GM18951 (cell line): ENCODE measurements at regions of chr14 and their contacts with region 1.

Region 1: GRCh38 chr14:20855652-20856291 is 35.4 kb upstream of the RNASE3 start:
- POLR2A ChIP-seq: no peak

Region 2: DNA sequence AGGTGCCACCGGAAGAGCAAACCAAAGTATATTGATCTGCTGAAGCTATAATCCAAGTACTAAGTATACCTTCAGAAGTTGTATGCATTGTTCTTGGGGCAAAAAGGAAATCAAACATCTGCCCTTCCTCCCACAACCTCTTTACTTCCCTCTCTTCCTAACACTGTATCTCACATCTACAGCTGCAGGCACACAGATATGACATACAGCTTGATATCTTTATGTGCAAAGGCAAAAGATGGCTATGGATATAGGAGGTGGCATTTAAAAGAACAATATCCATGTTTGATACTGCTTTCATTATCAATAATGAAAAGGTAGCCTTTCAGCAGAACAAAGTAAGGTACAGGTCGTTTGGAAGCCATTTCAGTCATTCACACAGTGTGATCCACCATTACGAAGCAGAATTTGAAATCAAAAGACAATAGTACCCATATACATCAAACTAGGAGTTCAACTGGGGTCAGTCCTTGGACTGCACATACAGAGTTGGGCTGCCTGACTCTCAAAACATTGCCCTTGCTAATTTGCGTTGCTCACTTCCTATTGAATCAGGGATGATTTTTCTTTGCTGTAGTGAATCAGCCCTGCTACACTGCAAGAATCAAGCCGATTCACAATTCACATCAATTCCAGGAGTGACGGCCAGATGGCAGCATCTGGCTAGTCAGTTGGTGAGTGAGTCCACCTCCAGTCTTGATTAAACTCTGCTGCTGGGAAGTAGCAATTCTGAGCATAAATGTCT is 158.3 kb before region 1 on chr14:
- in situ Hi-C with region 1: loop called (anchors 5 kb)
- POLR2A ChIP-seq: no peak

Region 3: GRCh38 chr14:20904393-20905029 is 48.7 kb after region 1 on chr14:
- in situ Hi-C with region 1: no loop called
- POLR2A ChIP-seq: no peak